Posterior cingulate gyrus (tissue), 11 donors: ENCODE measurements at regions of chr7 and their contacts with region 1.

Region 1: DNA sequence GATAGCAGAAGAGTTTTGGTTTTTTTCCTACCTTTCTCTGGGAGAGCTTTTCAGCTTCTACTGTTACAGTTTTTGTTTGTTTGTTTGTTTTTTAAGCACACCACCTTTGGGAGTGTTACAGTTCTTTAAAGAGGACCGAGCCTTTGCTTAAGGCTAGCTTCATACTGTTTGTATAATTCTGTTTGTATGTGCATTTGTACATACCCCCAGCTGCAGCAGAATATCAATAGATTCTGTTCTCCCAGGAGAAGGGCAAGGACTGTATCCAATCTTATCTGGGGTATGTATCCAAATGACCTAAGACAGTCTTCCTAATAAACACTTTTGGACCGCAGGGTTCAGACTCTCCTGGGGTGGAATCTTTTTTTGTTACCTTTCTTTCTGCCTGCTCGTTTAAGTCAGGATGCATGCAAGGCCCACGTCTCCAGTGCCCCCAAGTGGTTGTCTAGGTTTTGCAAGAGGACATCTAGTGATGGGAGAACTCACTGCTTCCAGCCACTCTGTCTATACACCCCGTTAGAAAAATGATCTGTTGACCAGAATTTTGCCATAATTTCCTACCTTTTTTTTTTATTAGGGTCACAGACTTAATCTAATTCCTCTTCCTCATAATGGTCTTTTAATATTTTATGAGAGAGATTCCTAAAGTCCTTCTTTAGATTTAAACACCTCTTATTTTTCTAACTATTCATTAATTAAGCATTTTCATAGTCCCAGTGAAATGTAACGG is 23.9 kb downstream of the NRF1 start:
- DNase-seq: peak; percentile 40 to 96 (median 70)

Region 2: GRCh38 chr7:129502376-129502776 is 133.1 kb before region 1 on chr7 and contains the start of gene SMKR1:
- intact Hi-C with region 1: loop called (anchors 10 kb)
- DNase-seq: peak; percentile 45 to 97 (median 80)

Region 3: DNA sequence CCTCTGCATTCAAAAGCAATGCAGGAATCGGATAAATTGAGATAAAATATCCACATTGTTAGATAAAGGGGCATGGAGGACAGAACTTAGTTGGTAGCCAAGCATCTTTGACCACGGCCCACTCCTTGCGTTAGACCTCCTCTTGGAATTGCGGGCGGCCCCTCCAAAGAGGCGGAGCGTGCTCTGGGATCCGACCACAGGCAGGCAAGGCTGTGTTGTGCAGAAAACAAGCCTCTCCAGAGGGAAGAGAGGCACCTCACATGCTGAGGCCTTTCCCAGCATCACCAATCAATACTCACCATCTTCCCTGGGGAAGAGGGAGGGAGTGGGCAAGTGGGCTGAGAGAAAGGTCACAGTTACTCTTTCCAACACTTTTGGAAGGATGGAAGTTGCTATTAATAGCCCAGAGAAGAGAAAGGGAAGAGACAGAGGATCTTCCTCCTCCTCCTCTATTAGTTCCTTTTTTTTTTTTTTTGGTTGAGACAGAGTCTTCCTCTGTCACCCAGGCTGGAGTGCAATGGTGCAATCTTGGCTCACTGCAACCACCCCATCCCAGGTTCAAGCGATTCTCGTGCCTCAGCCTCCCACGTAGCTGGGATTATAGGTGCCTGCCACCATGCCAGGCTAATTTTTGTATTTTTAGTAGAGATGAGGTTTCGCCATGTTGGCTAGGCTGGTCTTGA is 73.6 kb before region 1 on chr7:
- intact Hi-C with region 1: no loop called
- DNase-seq: peak in 1 of 10 donors; percentile 78

Region 4: GRCh38 chr7:129611246-129612111 is 24.0 kb before region 1 on chr7 and contains the start of gene NRF1:
- intact Hi-C with region 1: loop called (anchors 2 kb)
- DNase-seq: peak; percentile 77 to 97 (median 85)